Activated naive CD4-positive, alpha-beta T cell treated with anti-CD3 and anti-CD28 coated beads for 36 hours (primary cell): ENCODE measurements at regions of chr1 and their contacts with region 1.

Region 1: GRCh38 chr1:150532868-150533302 is 16.3 kb upstream of the ADAMTSL4 start:
- DNase-seq: no peak
- H3K4me3 Mint-ChIP-seq: no peak overlapping the region
- H3K27ac Mint-ChIP-seq: no peak overlapping the region
- H3K4me1 Mint-ChIP-seq: peaks cover 2% of the 10 kb centered on the region
- H3K27me3 Mint-ChIP-seq: peaks cover 3% of the 10 kb centered on the region

Region 2: GRCh38 chr1:150464422-150464826 is 68.5 kb before region 1 on chr1:
- CTCF ChIA-PET with region 1: interaction called, 8 read pairs
- intact Hi-C with region 1: loop called (anchors 1 kb)
- DNase-seq: peak; percentile 79
- H3K4me3 Mint-ChIP-seq: no peak overlapping the region
- H3K27ac Mint-ChIP-seq: peak overlapping the region; percentile 41
- H3K4me1 Mint-ChIP-seq: peaks cover 2% of the 10 kb centered on the region
- H3K27me3 Mint-ChIP-seq: no peaks in the 10 kb centered on the region

Region 3: DNA sequence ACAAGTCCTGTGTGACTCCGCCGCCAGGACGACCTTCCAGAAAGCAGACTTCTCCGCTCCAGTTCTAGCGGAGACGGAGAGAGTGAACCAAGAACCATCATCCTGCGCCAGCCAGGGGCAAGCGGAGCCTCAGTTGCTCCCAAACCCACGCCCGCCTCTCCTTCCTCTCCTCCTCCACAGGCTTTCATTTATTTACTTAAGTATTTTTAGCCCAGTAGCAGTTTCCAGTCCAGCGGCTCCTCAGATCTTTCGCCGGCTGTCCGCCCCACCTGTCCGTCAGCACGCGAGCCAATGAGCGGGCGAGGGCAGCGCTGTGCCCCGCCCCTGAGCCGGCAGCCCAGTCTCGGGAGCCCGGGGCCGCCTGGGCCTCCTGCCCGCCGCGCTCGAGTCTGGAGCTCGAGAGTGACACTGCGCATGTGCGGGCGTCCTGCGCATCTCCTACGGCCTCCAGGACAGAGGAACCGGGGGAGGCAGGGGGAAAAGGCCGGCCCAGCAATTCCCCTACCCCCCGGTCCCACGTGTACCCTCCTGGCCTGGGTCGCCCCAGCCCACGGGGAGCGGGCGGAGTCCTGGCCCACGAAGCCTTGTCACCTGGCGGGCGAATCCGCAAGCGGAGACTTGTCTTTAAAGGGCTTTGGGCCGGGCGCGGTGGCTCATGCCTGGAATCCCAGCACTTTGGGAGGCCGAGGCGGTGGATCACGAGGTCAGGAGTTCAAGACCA is 17.4 kb before region 1 on chr1 and contains the start of gene FALEC:
- CTCF ChIA-PET with region 1: interaction called, 10 read pairs
- intact Hi-C with region 1: no loop called
- DNase-seq: peak; percentile 91
- H3K4me3 Mint-ChIP-seq: peak within 1 kb of the TSS; percentile 90
- H3K27ac Mint-ChIP-seq: peak within 1 kb of the TSS; percentile 20
- H3K4me1 Mint-ChIP-seq: peaks cover 9% of the 10 kb centered on the region
- H3K27me3 Mint-ChIP-seq: no peaks in the 10 kb centered on the region
- total RNA-seq, gene FALEC: not detected

Region 4: GRCh38 chr1:150543500-150544141 is 10.7 kb after region 1 on chr1:
- CTCF ChIA-PET with region 1: interaction called, 14 read pairs
- intact Hi-C with region 1: no loop called
- DNase-seq: no peak
- H3K4me3 Mint-ChIP-seq: no peak overlapping the region
- H3K27ac Mint-ChIP-seq: no peak overlapping the region
- H3K4me1 Mint-ChIP-seq: peaks cover 3% of the 10 kb centered on the region
- H3K27me3 Mint-ChIP-seq: peaks cover 13% of the 10 kb centered on the region